ENCODE measurements at regions of chr19 and their contacts with region 1.

Region 1: DNA sequence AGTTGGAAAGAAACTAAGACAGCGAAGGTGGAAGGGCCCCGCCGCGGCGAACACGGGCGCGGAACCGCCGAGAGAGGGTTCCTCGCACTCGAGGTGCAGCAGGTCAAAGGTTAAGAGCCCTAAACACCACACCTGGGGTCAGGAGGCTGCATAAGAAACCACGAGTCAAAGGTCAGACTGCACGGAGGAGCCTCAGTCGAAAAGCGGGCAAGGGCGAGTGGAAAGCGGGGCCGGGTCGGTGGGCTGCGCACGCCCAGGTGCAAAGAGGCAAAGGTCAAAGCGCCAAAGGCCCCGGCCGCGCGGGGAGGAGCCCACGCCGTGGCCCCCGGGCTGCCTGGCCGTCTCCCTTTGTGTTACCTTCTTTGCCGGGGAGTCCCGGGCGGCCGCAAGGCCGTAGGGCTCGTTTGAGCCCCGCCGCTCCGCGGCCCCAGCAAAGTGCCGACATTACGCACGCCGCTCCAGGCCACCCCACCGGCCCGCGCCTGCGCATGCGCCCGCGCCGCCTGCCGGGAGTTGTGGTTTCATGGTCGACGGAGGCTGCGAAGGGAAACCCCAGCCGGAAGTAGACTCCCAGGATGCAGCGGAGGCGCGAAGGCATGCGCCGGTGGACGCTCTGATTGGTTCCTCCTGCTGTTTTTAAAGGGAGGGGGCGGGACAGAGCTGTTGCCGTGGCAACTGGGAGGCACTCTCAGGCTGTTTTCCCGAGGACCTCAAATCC is at the start of gene POLRMT:
- DNase-seq: peak; percentile 99
- ATAC-seq: peak; percentile 96
- H3K4me3 ChIP-seq: peak within 1 kb of the TSS; percentile 72 to 93 (median 81)
- H3K4me3 Mint-ChIP-seq: peak within 1 kb of the TSS; percentile 91
- H3K27ac ChIP-seq: peak within 1 kb of the TSS; percentile 52 to 75
- H3K27ac Mint-ChIP-seq: peak within 1 kb of the TSS; percentile 89
- H3K4me1 ChIP-seq: peaks cover 14 to 41% of the 10 kb centered on the region in 2 donors
- H3K4me1 Mint-ChIP-seq: peaks cover 34% of the 10 kb centered on the region
- H3K27me3 ChIP-seq: peaks cover 0 to 2% (median 0%) of the 10 kb centered on the region in 4 experiments
- H3K27me3 Mint-ChIP-seq: no peaks in the 10 kb centered on the region
- CTCF ChIP-seq: no peak
- total RNA-seq, gene POLRMT: 73.2 and 77.8 TPM in 2 replicates

Region 2: GRCh38 chr19:409516-410242 is 223.5 kb before region 1 on chr19:
- CTCF ChIA-PET with region 1: no interaction called
- POLR2A ChIA-PET with region 1: interaction called, 17 read pairs
- intact Hi-C with region 1: no loop called
- DNase-seq: peak; percentile 32
- ATAC-seq: no peak
- H3K4me3 ChIP-seq: peak overlapping the region in 4 of 5 experiments; percentile 11 to 52 (median 42)
- H3K4me3 Mint-ChIP-seq: peak overlapping the region; percentile 88
- H3K27ac ChIP-seq: no peak overlapping the region
- H3K27ac Mint-ChIP-seq: no peak overlapping the region
- H3K4me1 ChIP-seq: peaks cover 14 to 16% of the 10 kb centered on the region in 2 donors
- H3K4me1 Mint-ChIP-seq: peaks cover 6% of the 10 kb centered on the region
- H3K27me3 ChIP-seq: peaks cover 0 to 32% (median 10%) of the 10 kb centered on the region in 4 experiments
- H3K27me3 Mint-ChIP-seq: peaks cover 17% of the 10 kb centered on the region
- CTCF ChIP-seq: no peak

Region 3: DNA sequence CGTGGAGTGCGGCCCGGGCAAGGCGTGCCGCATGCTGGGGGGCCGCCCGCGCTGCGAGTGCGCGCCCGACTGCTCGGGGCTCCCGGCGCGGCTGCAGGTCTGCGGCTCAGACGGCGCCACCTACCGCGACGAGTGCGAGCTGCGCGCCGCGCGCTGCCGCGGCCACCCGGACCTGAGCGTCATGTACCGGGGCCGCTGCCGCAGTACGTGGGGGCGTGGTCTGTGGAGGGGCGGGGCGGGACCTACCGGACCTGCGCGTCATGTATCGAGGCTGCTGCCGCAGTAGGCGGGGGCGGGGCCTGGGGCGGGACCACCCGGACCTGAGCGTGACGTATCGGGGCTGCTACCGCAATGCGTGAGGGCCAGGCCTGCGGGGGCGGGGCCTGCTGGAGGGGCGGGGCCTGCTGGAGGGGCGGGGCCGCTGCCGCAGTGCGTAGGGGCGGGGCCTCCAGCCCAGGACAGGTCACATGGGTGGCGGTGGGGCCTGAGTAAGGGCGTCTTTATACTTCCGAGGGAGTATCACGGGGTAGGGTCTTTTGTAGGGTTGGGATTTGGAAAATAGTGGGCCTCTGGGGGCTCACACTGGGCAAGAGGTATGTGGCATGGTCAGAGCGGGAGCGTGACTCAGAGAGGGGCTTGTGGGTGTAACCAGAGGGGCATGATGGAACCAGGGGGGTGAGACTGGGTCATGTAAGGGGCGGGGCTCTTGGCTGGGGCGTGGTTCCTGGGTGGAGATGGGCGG is 47.2 kb after region 1 on chr19:
- CTCF ChIA-PET with region 1: no interaction called
- POLR2A ChIA-PET with region 1: no interaction called
- intact Hi-C with region 1: loop called (anchors 1 kb)
- DNase-seq: peak; percentile 99
- ATAC-seq: peak; percentile 84
- H3K4me3 ChIP-seq: peak overlapping the region; percentile 53 to 91 (median 60)
- H3K4me3 Mint-ChIP-seq: peak overlapping the region; percentile 96
- H3K27ac ChIP-seq: peak overlapping the region; percentile 81 to 89
- H3K27ac Mint-ChIP-seq: peak overlapping the region; percentile 98
- H3K4me1 ChIP-seq: peaks cover 11 to 26% of the 10 kb centered on the region in 2 donors
- H3K4me1 Mint-ChIP-seq: peaks cover 9% of the 10 kb centered on the region
- H3K27me3 ChIP-seq: peaks cover 0 to 20% (median 6%) of the 10 kb centered on the region in 4 experiments
- H3K27me3 Mint-ChIP-seq: peaks cover 1% of the 10 kb centered on the region
- CTCF ChIP-seq: peak; percentile 56

Measured in B cell (primary cell).